Aorta (tissue), 5 donors: ENCODE measurements at regions of chr3 and their contacts with region 1.

Region 1: DNA sequence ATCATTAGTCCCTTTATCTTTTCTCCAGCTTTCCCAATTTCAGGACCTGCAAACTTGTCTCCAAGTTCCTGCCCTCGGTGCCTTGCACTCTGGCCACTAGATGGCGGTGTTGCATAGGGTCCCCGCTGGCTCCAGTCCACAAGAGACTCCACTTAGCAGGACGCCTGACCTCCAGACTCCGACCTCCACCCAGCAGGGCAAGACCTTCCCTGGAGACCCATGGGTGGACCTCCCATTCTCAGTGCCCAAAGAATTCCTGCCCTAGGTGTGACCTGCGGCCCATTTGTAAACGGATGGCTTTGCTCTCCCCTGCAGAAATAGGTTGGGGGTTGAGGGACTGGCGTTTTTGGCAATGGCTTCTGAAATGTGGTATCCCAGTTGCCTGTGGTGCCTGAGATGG is 82.6 kb downstream of the LSM3 start:
- DNase-seq: peak; percentile 83 to 94
- ATAC-seq: peak; percentile 86
- H3K4me3 ChIP-seq: no peak overlapping the region
- H3K27ac ChIP-seq: no peak overlapping the region
- H3K4me1 ChIP-seq: no peaks in the 10 kb centered on the region
- H3K27me3 ChIP-seq: no peaks in the 10 kb centered on the region

Region 2: DNA sequence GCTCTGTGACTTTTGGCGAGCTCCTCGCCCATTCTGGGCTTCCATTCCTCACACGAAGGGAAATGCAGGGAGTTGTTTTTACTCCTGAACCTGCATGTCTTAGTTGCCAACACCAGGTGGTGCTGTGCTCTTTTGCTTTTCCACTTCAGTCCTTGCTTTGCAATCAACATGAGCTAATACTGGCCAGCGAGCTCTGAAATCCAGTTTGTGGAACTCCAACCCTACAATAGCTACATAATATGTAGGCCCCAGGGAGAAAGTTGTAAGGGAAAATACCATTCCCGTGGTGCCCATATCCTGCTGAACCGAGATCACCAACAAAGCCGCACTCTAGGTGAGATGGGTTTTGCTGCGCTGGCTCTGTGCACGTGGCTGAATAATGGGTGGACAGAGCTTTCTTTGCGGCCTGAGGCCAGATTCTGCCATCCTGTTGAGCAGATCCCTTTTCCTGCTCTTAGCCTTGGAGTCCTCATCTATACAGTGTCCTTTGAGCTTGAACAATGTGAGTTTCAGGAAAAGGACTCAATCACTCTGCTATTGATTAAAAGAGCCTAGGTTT is 57.6 kb before region 1 on chr3:
- intact Hi-C with region 1: loop called in 1 of 2 experiments (anchors 5 kb)
- DNase-seq: peak in 1 of 2 donors; percentile 64
- ATAC-seq: peak; percentile 91
- H3K4me3 ChIP-seq: no peak overlapping the region
- H3K27ac ChIP-seq: no peak overlapping the region
- H3K4me1 ChIP-seq: peaks cover 2% of the 10 kb centered on the region in 2 donors
- H3K27me3 ChIP-seq: no peaks in the 10 kb centered on the region

Region 3: GRCh38 chr3:14371573-14372474 is 110.6 kb after region 1 on chr3:
- intact Hi-C with region 1: loop called in 1 of 2 experiments (anchors 5 kb)
- DNase-seq: peak; percentile 82 to 88
- ATAC-seq: peak; percentile 37
- H3K4me3 ChIP-seq: no peak overlapping the region
- H3K27ac ChIP-seq: no peak overlapping the region
- H3K4me1 ChIP-seq: no peaks in the 10 kb centered on the region
- H3K27me3 ChIP-seq: no peaks in the 10 kb centered on the region

Region 4: GRCh38 chr3:14467814-14468620 is 206.8 kb after region 1 on chr3:
- intact Hi-C with region 1: loop called (anchors 2 kb)
- DNase-seq: no peak
- ATAC-seq: peak; percentile 78
- H3K4me3 ChIP-seq: no peak overlapping the region
- H3K27ac ChIP-seq: no peak overlapping the region
- H3K4me1 ChIP-seq: no peaks in the 10 kb centered on the region
- H3K27me3 ChIP-seq: no peaks in the 10 kb centered on the region

Region 5: DNA sequence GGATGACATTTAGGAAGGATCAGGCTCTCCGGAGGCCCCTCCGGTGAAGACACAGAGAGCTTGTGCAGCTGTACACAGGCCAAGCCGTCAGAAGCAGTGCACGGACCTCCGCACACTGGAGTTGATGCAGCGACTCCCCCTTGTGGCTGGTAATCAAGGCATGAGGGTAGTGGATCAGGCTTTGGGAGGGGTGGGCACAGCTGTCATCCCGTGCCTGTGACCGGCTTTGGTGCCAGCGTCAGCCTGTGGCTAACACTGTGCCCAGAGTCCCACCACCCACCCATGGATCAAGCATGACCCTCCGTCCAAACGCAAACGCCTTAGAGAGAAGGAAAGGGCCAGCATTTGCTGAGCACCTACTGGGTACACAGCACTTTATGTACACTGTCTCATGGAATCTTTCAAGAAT is 287.1 kb after region 1 on chr3:
- intact Hi-C with region 1: loop called in 1 of 2 experiments (anchors 5 kb)
- DNase-seq: peak; percentile 75 to 83
- ATAC-seq: peak; percentile 81
- H3K4me3 ChIP-seq: no peak overlapping the region
- H3K27ac ChIP-seq: no peak overlapping the region
- H3K4me1 ChIP-seq: no peaks in the 10 kb centered on the region
- H3K27me3 ChIP-seq: peaks cover 0 to 2% of the 10 kb centered on the region in 2 donors